ENCODE measurements at regions of chr7 and their contacts with region 1.

Region 1: DNA sequence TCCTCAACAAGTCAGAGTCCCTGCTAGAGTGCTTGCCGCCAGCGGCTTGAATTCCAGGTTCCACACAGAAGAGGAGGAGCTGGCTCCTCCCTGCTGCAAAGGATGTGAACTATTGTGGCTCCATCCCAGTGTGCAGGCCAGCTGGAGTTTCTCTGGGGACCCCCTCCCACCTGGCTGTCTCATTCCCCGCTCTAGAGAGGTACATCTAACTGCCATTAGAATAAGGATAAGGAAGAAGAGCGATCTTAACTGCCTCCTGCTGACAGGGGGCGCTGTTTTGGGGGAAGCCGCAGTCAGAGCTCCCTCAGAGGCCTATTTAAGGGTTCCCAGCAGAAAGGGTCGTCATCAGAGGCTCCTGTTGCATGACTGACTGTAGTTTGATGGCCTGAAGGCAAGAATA is 40.8 kb upstream of the HECW1 start:
- DNase-seq: no peak
- H3K4me3 Mint-ChIP-seq: no peak overlapping the region
- H3K27ac Mint-ChIP-seq: no peak overlapping the region
- H3K4me1 Mint-ChIP-seq: peaks cover 25% of the 10 kb centered on the region
- H3K27me3 Mint-ChIP-seq: peaks cover 9% of the 10 kb centered on the region

Region 2: GRCh38 chr7:42964849-42965805 is 106.5 kb before region 1 on chr7:
- intact Hi-C with region 1: loop called (anchors 5 kb)
- DNase-seq: no peak
- H3K4me3 Mint-ChIP-seq: no peak overlapping the region
- H3K27ac Mint-ChIP-seq: peak overlapping the region; percentile 16
- H3K4me1 Mint-ChIP-seq: peaks cover 12% of the 10 kb centered on the region
- H3K27me3 Mint-ChIP-seq: no peaks in the 10 kb centered on the region

Region 3: GRCh38 chr7:43669286-43670081 is 597.9 kb after region 1 on chr7:
- intact Hi-C with region 1: loop called (anchors 10 kb)
- DNase-seq: peak; percentile 29
- H3K4me3 Mint-ChIP-seq: peak overlapping the region; percentile 65
- H3K27ac Mint-ChIP-seq: peak overlapping the region; percentile 91
- H3K4me1 Mint-ChIP-seq: peaks cover 51% of the 10 kb centered on the region
- H3K27me3 Mint-ChIP-seq: no peaks in the 10 kb centered on the region

Region 4: DNA sequence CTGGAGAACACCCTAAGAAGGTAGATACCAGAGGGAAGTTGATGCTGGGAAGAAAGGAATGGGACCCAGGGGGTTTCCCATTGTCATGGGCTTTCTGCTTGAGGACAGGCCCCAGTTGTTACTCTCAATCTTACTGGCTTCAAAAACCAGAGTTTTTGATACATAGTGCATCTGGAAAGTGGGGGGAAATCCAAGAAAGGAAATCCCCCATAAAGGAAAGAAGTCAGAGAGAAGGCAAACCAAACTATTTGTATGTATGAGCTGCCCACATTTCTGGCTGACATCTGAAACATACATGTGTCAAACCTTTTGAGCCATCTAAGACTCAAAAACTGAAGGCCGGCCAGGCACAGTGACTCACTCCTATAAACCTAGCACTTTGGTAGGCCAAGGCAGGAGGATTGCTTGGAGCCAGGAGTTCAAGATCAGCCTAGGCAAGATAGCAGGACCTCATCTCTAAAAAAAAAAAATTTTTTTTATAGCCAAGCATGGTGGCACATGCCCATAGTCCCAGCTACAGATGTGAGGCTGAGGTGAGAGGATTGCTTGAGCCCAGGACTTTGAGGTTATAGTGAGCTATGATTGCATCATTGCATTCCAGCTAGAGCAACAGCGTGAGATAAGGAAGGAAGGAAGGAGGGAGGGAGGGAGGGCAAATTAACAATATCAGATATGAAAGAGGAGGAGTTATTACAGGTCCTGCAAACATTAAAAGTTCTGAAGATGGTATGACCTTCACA is 664.4 kb after region 1 on chr7:
- intact Hi-C with region 1: loop called (anchors 10 kb)
- DNase-seq: no peak
- H3K4me3 Mint-ChIP-seq: no peak overlapping the region
- H3K27ac Mint-ChIP-seq: peak overlapping the region; percentile 53
- H3K4me1 Mint-ChIP-seq: peaks cover 24% of the 10 kb centered on the region
- H3K27me3 Mint-ChIP-seq: peaks cover 3% of the 10 kb centered on the region

Region 5: GRCh38 chr7:44944821-44945220 is 1873.2 kb after region 1 on chr7:
- intact Hi-C with region 1: no loop called
- DNase-seq: no peak
- H3K4me3 Mint-ChIP-seq: no peak overlapping the region
- H3K27ac Mint-ChIP-seq: no peak overlapping the region
- H3K4me1 Mint-ChIP-seq: no peaks in the 10 kb centered on the region
- H3K27me3 Mint-ChIP-seq: peaks cover 32% of the 10 kb centered on the region

Measured in activated T-helper 1 cell treated with anti-CD3 and anti-CD28 coated beads, Interleukin-12 subunit alpha, Interleukin-12 subunit beta, Interleukin-2, Interleukin-4 antibody, amounts not matched to agents 30 ng/mL and 10 ng/mL and 1 ng/mL, durations not matched to agents 14 hours and 24 hours and 36 hours (primary cell).